WTC11 (cell line): ENCODE measurements at regions of chr7 and their contacts with region 1.

Region 1: GRCh38 chr7:98831641-98832221 is 38.1 kb downstream of the TMEM130 start:
- DNase-seq: peak; percentile 70
- ATAC-seq: peak; percentile 49
- H3K4me3 Mint-ChIP-seq: no peak overlapping the region
- H3K27ac Mint-ChIP-seq: no peak overlapping the region
- H3K4me1 Mint-ChIP-seq: peaks cover 10% of the 10 kb centered on the region
- H3K27me3 Mint-ChIP-seq: no peaks in the 10 kb centered on the region; the same call in 1 of the 2 replicates
- CTCF ChIP-seq: peak; percentile 81

Region 2: GRCh38 chr7:98400542-98401340 is 431.0 kb before region 1 on chr7 and contains the start of gene BAIAP2L1:
- CTCF ChIA-PET with region 1: interaction called, 12 read pairs
- POLR2A ChIA-PET with region 1: no interaction called
- DNase-seq: peak; percentile 98
- ATAC-seq: peak; percentile 91
- H3K4me3 Mint-ChIP-seq: peak within 1 kb of the TSS; percentile 84
- H3K27ac Mint-ChIP-seq: peak within 1 kb of the TSS; percentile 97
- H3K4me1 Mint-ChIP-seq: peaks cover 36% of the 10 kb centered on the region
- H3K27me3 Mint-ChIP-seq: no peaks in the 10 kb centered on the region; the same call in 1 of the 2 replicates
- CTCF ChIP-seq: peak; percentile 57; the same call in 1 of the 2 replicates
- total RNA-seq, gene BAIAP2L1: 35.5 to 37.5 TPM (median 36.8 TPM) in 3 replicates

Region 3: GRCh38 chr7:98569691-98570337 is 261.9 kb before region 1 on chr7:
- CTCF ChIA-PET with region 1: no interaction called
- POLR2A ChIA-PET with region 1: no interaction called
- DNase-seq: no peak
- ATAC-seq: no peak
- H3K4me3 Mint-ChIP-seq: no peak overlapping the region
- H3K27ac Mint-ChIP-seq: no peak overlapping the region
- H3K4me1 Mint-ChIP-seq: peaks cover 5% of the 10 kb centered on the region; the same call in 1 of the 2 replicates
- H3K27me3 Mint-ChIP-seq: peaks cover 9% of the 10 kb centered on the region; the same call in 1 of the 2 replicates
- CTCF ChIP-seq: no peak

Region 4: GRCh38 chr7:98647326-98647725 is 184.4 kb before region 1 on chr7:
- CTCF ChIA-PET with region 1: no interaction called
- POLR2A ChIA-PET with region 1: no interaction called
- DNase-seq: no peak
- ATAC-seq: no peak
- H3K4me3 Mint-ChIP-seq: no peak overlapping the region
- H3K27ac Mint-ChIP-seq: no peak overlapping the region
- H3K4me1 Mint-ChIP-seq: no peaks in the 10 kb centered on the region
- H3K27me3 Mint-ChIP-seq: no peaks in the 10 kb centered on the region
- CTCF ChIP-seq: no peak

Region 5: DNA sequence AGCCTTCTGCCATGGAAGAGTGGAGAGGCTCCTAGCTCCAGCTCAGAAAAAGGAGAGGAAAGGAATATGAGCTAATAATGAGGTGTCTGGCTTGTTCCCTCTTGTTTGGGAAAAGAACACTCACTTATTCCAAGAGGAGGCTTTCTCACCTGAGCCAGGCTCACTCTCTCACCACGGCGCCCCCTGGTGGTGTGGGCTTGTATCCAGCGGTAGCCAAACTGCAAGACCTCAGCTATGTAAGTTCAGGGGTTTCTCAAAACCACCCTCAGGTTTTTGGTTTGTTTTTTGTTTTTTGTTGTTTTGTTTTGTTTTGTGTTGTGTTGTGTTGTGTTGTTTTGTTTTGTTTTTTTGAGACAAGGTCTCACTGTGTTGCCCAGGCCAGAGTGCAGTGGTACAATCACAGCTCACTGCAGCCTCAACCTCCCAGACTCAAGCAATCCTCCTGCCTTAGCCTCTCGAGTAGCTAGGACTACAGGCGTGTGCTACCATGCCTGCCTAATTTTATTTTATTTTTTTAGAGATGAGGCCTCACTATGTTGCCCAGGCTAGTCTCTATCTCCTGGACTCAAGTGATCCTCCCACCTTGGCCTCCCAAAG is 85.9 kb before region 1 on chr7:
- CTCF ChIA-PET with region 1: interaction called, 26 read pairs
- POLR2A ChIA-PET with region 1: no interaction called
- DNase-seq: peak; percentile 91
- ATAC-seq: peak; percentile 80
- H3K4me3 Mint-ChIP-seq: no peak overlapping the region
- H3K27ac Mint-ChIP-seq: no peak overlapping the region
- H3K4me1 Mint-ChIP-seq: no peaks in the 10 kb centered on the region
- H3K27me3 Mint-ChIP-seq: no peaks in the 10 kb centered on the region; the same call in 1 of the 2 replicates
- CTCF ChIP-seq: peak; percentile 93

Region 6: DNA sequence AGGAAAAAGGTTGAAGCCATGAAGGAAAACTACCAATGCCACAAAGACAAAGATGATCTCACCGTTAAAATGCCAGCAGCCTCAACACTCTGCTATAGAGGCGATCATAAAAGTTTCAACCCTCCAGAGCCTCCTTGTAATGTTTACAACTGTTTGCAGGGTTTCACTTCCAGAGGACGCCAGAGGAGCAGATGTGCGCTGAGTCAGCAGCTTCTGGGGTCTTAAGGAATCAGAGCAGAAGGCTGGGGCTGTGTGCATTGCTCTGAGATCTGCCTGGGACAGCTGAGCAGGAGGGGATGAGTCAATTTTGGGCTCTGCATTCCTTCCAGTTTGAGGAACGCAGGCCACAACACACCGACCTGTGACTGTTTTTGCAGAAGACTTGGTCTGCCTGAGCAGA is 60.2 kb before region 1 on chr7:
- CTCF ChIA-PET with region 1: interaction called, 35 read pairs
- POLR2A ChIA-PET with region 1: interaction called, 3 read pairs
- DNase-seq: peak; percentile 25
- ATAC-seq: peak; percentile 71
- H3K4me3 Mint-ChIP-seq: peak overlapping the region; percentile 60
- H3K27ac Mint-ChIP-seq: peak overlapping the region; percentile 76
- H3K4me1 Mint-ChIP-seq: peaks cover 38% of the 10 kb centered on the region
- H3K27me3 Mint-ChIP-seq: peaks cover 8% of the 10 kb centered on the region
- CTCF ChIP-seq: no peak

Region 7: DNA sequence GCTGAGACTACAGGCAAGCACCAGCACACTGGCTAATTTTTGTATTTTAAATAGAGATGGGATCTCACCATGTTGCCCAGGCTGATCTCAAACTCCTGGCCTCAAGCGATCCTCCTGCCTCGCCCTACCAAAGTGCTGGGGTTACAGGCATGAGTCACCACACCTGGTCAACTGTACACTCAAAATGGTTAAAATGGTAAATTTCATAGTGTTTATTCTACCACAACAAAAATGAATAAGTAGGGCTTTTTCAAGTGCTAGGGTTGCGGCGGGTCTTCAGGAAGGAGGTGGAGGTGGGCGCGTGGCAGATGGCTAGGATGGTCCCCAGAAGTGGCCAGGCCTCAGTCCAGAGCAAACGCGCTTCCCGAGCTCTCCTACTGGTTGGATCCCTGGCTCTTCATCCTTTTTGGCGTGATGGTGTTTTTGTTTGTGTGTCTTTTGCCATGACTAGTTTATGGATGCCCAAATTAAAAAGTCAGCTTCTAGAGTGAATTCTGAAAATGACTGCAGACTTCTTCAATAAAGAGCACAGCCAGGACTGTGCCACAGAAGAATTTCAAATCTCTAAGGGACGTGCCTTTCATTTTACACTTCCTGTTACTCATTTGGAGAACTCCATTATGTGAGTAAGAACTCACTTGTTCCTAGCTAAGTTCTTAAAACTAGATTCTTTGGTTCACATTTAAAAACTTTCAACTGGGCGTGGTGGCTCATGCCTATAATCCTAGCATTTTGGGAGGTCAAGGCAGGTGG is 35.8 kb before region 1 on chr7:
- CTCF ChIA-PET with region 1: interaction called, 10 read pairs
- POLR2A ChIA-PET with region 1: no interaction called
- DNase-seq: no peak
- ATAC-seq: no peak
- H3K4me3 Mint-ChIP-seq: no peak overlapping the region
- H3K27ac Mint-ChIP-seq: no peak overlapping the region
- H3K4me1 Mint-ChIP-seq: no peaks in the 10 kb centered on the region
- H3K27me3 Mint-ChIP-seq: no peaks in the 10 kb centered on the region; the same call in 1 of the 2 replicates
- CTCF ChIP-seq: no peak

Region 8: DNA sequence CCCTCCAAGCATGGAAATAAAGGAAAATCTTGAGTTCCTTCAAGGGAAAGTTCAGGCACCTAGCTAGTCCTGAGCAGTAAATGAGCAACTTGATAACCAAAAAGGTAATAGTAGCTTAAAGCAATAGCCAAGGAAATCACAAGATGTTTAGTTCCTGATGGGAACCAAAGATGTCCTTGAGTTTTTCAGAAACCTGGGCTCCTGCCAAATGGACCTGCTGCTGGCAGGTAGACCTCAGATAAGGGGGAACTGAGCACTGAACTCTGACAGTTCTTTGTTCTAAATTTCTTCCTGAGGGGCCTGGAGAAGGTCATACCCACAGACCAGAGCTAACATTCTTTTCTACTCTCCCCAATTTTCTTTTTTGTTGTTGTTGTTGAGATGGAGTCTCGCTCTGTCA is 10.4 kb before region 1 on chr7:
- CTCF ChIA-PET with region 1: interaction called, 37 read pairs
- POLR2A ChIA-PET with region 1: no interaction called
- DNase-seq: no peak
- ATAC-seq: no peak
- H3K4me3 Mint-ChIP-seq: no peak overlapping the region
- H3K27ac Mint-ChIP-seq: no peak overlapping the region
- H3K4me1 Mint-ChIP-seq: peaks cover 14% of the 10 kb centered on the region
- H3K27me3 Mint-ChIP-seq: no peaks in the 10 kb centered on the region
- CTCF ChIP-seq: no peak